ENCODE measurements at regions of chr5 and their contacts with region 1.

Region 1: DNA sequence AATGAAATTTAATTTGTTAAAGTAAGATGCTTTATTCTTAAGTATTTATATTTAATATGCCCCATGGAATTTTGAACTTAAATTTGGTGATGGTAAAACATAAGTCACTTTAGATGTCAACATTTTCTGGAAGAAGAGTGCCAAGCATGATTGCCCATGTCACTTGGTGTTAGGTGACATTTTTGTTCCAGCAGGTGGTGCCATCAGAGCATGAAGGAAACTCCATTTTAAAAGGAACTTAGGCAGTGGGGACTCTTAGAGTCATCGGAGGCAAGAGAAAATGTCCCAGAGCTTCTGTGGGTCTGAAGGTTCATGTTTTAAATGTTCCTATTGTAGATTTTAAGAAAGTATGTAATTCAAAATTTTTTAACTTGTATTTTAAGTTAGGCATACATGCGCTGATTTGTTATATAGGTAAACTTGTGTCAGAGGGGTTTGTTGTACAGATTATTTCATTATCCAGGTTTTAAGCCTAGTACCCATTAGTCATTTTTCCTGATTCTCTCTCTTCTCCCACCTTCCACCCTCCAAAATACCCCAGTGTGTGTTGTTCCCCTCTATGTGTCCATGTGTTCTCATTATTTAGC is 789.3 kb downstream of the SEMA5A start:
- DNase-seq: peak; percentile 60
- H3K4me3 ChIP-seq: no peak overlapping the region
- H3K27ac ChIP-seq: no peak overlapping the region
- H3K4me1 ChIP-seq: no peaks in the 10 kb centered on the region
- H3K27me3 ChIP-seq: no peaks in the 10 kb centered on the region

Region 2: GRCh38 chr5:8383616-8384015 is 373.0 kb before region 1 on chr5:
- in situ Hi-C with region 1: no loop called
- DNase-seq: no peak
- H3K4me3 ChIP-seq: no peak overlapping the region
- H3K27ac ChIP-seq: no peak overlapping the region
- H3K4me1 ChIP-seq: no peaks in the 10 kb centered on the region
- H3K27me3 ChIP-seq: no peaks in the 10 kb centered on the region

Region 3: GRCh38 chr5:8560776-8561175 is 195.8 kb before region 1 on chr5:
- in situ Hi-C with region 1: no loop called
- DNase-seq: no peak
- H3K4me3 ChIP-seq: no peak overlapping the region
- H3K27ac ChIP-seq: no peak overlapping the region
- H3K4me1 ChIP-seq: no peaks in the 10 kb centered on the region
- H3K27me3 ChIP-seq: 0 out of 2 replicates have a peak, but pooled peaks cover 4% of the 10 kb centered on the region

Region 4: DNA sequence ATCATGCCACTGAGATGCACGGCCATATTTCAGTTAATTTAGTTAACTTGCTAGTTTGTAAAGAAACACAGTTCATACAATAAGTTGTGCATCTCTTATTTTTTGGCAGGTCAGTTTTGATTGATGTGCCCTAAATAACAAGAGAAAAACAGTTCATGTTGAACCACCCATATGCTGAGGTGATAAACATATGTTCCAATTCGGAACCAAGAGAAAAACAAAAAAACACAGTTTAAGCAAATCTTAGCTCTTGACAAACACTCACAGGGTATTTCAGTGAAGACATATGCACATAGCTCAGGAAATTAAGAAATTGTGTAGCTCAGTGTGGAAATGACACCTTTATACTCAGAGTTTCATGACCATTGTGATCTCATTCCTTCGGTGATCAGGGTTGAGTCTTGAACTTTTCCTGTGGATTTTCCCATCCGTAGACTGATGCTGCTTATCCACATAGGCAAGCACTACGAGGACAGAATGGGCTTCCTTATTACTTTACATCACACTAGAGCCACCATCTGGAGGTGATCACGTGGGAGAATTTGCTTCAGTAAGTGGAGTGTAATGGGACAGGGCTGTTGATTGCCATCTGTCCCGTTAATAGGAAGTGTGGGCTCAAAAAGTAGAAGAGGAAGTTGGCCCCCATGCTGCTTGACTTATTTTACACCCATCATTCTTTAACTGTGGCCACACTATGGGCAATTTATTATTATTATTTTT is 114.6 kb before region 1 on chr5:
- in situ Hi-C with region 1: no loop called
- DNase-seq: no peak
- H3K4me3 ChIP-seq: no peak overlapping the region
- H3K27ac ChIP-seq: no peak overlapping the region
- H3K4me1 ChIP-seq: no peaks in the 10 kb centered on the region
- H3K27me3 ChIP-seq: no peaks in the 10 kb centered on the region

Region 5: GRCh38 chr5:9207817-9208418 is 451.3 kb after region 1 on chr5:
- in situ Hi-C with region 1: loop called (anchors 10 kb)
- DNase-seq: peak; percentile 63
- H3K4me3 ChIP-seq: no peak overlapping the region
- H3K27ac ChIP-seq: no peak overlapping the region
- H3K4me1 ChIP-seq: peaks cover 26% of the 10 kb centered on the region
- H3K27me3 ChIP-seq: no peaks in the 10 kb centered on the region

Region 6: DNA sequence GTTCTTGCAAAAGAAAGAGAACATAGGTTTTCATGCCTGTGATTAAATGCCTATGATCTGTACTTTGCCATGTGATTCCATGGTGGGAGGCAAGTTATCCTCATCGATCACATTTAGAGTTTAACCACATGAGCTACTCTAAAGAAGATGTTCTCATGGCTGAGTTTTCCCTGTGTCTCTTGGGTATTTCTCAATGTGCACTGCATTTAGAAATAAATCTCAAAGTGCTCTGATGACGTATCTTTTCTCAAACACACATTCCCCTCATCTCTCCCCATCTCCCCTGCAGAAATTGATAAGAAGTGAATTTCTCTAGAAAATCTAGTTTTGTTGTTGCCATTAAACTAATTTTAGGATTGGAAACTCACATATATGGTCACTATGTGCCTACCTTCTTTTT is 507.1 kb after region 1 on chr5:
- in situ Hi-C with region 1: no loop called
- DNase-seq: no peak
- H3K4me3 ChIP-seq: no peak overlapping the region
- H3K27ac ChIP-seq: no peak overlapping the region
- H3K4me1 ChIP-seq: peaks cover 15% of the 10 kb centered on the region
- H3K27me3 ChIP-seq: no peaks in the 10 kb centered on the region

Measured in GM23248 (cell line).